Activated T-helper 1 cell treated with anti-CD3 and anti-CD28 coated beads, Interleukin-12 subunit alpha, Interleukin-12 subunit beta, Interleukin-2, Interleukin-4 antibody, amounts not matched to agents 30 ng/mL and 10 ng/mL and 1 ng/mL, durations not matched to agents 14 hours and 24 hours and 36 hours (primary cell): ENCODE measurements at regions of chr2 and their contacts with region 1.

Region 1: GRCh38 chr2:135052042-135052876 is at the start of gene RAB3GAP1:
- DNase-seq: peak; percentile 94
- H3K4me3 Mint-ChIP-seq: peak within 1 kb of the TSS; percentile 92
- H3K27ac Mint-ChIP-seq: peak within 1 kb of the TSS; percentile 99
- H3K4me1 Mint-ChIP-seq: peaks cover 54% of the 10 kb centered on the region
- H3K27me3 Mint-ChIP-seq: peaks cover 1% of the 10 kb centered on the region
- total RNA-seq, gene RAB3GAP1: 23.4 and 25.6 TPM in 2 replicates

Region 2: GRCh38 chr2:134527381-134527780 is 524.9 kb before region 1 on chr2:
- intact Hi-C with region 1: no loop called
- DNase-seq: no peak
- H3K4me3 Mint-ChIP-seq: no peak overlapping the region
- H3K27ac Mint-ChIP-seq: no peak overlapping the region
- H3K4me1 Mint-ChIP-seq: no peaks in the 10 kb centered on the region
- H3K27me3 Mint-ChIP-seq: peaks cover 6% of the 10 kb centered on the region

Region 3: GRCh38 chr2:134668821-134669220 is 383.4 kb before region 1 on chr2:
- intact Hi-C with region 1: loop called (anchors 2 kb)
- DNase-seq: peak; percentile 74
- H3K4me3 Mint-ChIP-seq: peak overlapping the region; percentile 37
- H3K27ac Mint-ChIP-seq: peak overlapping the region; percentile 47
- H3K4me1 Mint-ChIP-seq: peaks cover 59% of the 10 kb centered on the region
- H3K27me3 Mint-ChIP-seq: peaks cover 34% of the 10 kb centered on the region

Region 4: GRCh38 chr2:135063210-135063609 is 11.0 kb after region 1 on chr2:
- intact Hi-C with region 1: loop called (anchors 1 kb)
- DNase-seq: no peak
- H3K4me3 Mint-ChIP-seq: no peak overlapping the region
- H3K27ac Mint-ChIP-seq: no peak overlapping the region
- H3K4me1 Mint-ChIP-seq: peaks cover 21% of the 10 kb centered on the region
- H3K27me3 Mint-ChIP-seq: no peaks in the 10 kb centered on the region

Region 5: GRCh38 chr2:135531231-135532228 is 479.3 kb after region 1 on chr2 and contains the start of gene R3HDM1:
- intact Hi-C with region 1: loop called (anchors 1 kb)
- DNase-seq: peak; percentile 95
- H3K4me3 Mint-ChIP-seq: no peak within 1 kb of the TSS
- H3K27ac Mint-ChIP-seq: peak within 1 kb of the TSS; percentile 83
- H3K4me1 Mint-ChIP-seq: peaks cover 17% of the 10 kb centered on the region
- H3K27me3 Mint-ChIP-seq: no peaks in the 10 kb centered on the region
- total RNA-seq, gene R3HDM1: 63.0 and 64.0 TPM in 2 replicates

Region 6: DNA sequence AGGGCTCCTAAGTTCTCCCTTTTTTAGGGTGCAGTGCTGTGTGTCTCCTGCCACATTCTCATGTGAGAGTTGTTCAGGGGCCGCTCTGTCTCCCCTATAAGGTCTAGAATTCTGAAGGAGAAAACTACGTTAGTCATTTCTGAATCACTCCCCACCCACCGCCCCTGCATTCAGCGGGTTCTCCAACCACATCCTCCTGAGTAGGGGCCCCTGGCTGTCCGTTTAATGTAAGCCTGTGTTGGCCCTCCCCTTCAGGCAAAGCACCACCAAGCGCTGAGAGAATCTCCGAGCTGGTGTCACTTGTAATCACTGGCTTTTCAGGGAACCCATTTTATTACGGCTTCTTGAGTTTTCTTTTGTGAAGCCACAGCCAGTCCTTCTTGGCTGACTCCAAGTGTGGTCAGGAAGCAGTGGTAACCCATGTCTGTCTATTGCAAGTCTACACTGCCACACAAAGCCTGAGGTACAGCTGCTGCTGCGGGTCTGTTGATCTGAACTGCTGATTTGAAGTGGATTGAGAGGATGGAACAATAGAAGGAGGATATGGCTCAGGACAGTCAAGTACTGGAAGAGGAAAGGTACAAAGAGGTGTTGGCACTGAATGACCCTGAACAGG is 767.9 kb after region 1 on chr2:
- intact Hi-C with region 1: loop called (anchors 1 kb)
- DNase-seq: peak; percentile 75
- H3K4me3 Mint-ChIP-seq: peak overlapping the region; percentile 80
- H3K27ac Mint-ChIP-seq: peak overlapping the region; percentile 89
- H3K4me1 Mint-ChIP-seq: peaks cover 52% of the 10 kb centered on the region
- H3K27me3 Mint-ChIP-seq: no peaks in the 10 kb centered on the region

Region 7: DNA sequence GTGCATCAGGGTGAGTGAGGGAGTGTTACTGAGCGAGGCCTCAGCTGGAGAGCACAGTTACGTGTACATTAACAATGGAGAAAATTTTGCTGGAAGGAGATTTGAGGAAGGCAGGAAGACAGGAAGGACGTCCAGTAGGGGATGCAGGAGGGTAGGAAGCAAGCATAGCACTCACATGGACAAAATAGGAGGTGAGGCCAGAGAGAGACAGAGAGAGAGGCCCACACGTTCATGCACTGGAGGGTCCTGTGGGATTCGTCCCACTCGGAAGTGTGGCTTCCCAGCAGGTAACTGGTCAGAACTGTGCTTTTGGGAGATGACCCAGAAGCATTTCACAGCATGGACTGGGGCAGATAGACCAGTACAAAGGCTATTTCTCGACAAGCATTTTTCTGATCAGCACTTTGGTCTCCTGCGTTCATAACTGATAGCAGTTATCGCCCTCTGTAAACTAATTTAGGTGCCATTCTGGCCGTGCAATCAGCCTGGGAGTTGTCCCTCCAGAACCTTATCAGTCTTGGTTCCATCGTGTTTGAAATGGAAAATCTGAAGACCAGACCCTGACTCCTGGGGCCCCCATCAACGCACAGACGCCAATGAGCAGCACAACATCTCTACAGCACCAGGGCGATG is 779.0 kb after region 1 on chr2:
- intact Hi-C with region 1: no loop called
- DNase-seq: no peak
- H3K4me3 Mint-ChIP-seq: no peak overlapping the region
- H3K27ac Mint-ChIP-seq: no peak overlapping the region
- H3K4me1 Mint-ChIP-seq: peaks cover 5% of the 10 kb centered on the region
- H3K27me3 Mint-ChIP-seq: no peaks in the 10 kb centered on the region

Region 8: GRCh38 chr2:136135921-136136906 is 1084.0 kb after region 1 on chr2:
- intact Hi-C with region 1: loop called (anchors 5 kb)
- DNase-seq: peak; percentile 59
- H3K4me3 Mint-ChIP-seq: peak overlapping the region; percentile 17
- H3K27ac Mint-ChIP-seq: peak overlapping the region; percentile 60
- H3K4me1 Mint-ChIP-seq: peaks cover 82% of the 10 kb centered on the region
- H3K27me3 Mint-ChIP-seq: peaks cover 30% of the 10 kb centered on the region